ENCODE measurements at regions of chr4 and their contacts with region 1.

Region 1: GRCh38 chr4:26197018-26197779 is 123.6 kb upstream of the RBPJ start:
- DNase-seq: peak; percentile 93
- H3K4me3 Mint-ChIP-seq: peak overlapping the region; percentile 74
- H3K27ac Mint-ChIP-seq: peak overlapping the region; percentile 96
- H3K4me1 Mint-ChIP-seq: peaks cover 72% of the 10 kb centered on the region
- H3K27me3 Mint-ChIP-seq: no peaks in the 10 kb centered on the region

Region 2: DNA sequence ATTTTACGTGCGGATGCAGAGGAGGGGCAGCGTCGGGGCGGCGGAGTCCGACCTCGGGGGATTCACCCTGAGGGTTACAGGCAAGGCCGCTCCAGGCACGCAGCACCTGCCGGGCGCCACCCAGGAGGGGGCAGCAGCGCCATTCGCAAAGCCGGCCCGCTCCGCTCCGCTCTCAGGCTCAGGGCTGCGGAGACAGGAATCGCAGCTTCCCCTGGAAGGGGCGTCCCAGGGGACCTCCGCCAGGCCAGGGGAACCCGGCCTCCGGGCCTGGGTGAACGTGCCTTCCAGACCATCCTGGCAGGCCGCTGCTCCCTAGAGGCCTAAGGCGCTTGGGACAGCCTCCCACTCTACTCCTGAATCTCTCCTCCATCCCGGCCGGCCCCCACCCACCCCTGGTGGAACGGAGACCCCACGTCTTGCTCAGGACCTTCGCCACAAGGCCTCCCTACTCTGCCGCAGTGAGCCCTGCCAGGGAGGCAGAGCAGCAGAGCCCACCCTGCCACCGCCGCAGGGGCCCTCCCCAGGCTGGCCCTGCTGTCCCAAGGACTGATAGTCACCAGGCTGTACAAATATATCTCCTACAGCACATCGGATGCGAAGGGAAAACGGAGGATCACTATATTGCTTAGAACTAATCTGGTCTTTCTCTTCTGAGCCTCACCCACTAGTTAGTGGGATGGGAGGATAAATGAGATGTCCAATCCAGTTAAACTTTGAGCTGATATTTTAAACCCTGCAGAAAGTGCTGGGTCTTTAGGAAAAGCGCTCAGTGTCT is 168.2 kb before region 1 on chr4:
- intact Hi-C with region 1: loop called (anchors 5 kb)
- DNase-seq: peak; percentile 93
- H3K4me3 Mint-ChIP-seq: peak overlapping the region; percentile 22
- H3K27ac Mint-ChIP-seq: peak overlapping the region; percentile 47
- H3K4me1 Mint-ChIP-seq: peaks cover 18% of the 10 kb centered on the region
- H3K27me3 Mint-ChIP-seq: no peaks in the 10 kb centered on the region

Region 3: GRCh38 chr4:26088433-26088928 is 108.7 kb before region 1 on chr4:
- intact Hi-C with region 1: loop called (anchors 1 kb)
- DNase-seq: peak; percentile 77
- H3K4me3 Mint-ChIP-seq: peak overlapping the region; percentile 80
- H3K27ac Mint-ChIP-seq: peak overlapping the region; percentile 99
- H3K4me1 Mint-ChIP-seq: peaks cover 68% of the 10 kb centered on the region
- H3K27me3 Mint-ChIP-seq: no peaks in the 10 kb centered on the region

Region 4: GRCh38 chr4:26144526-26145155 is 52.6 kb before region 1 on chr4:
- intact Hi-C with region 1: loop called (anchors 1 kb)
- DNase-seq: no peak
- H3K4me3 Mint-ChIP-seq: peak overlapping the region; percentile 56
- H3K27ac Mint-ChIP-seq: peak overlapping the region; percentile 98
- H3K4me1 Mint-ChIP-seq: peaks cover 53% of the 10 kb centered on the region
- H3K27me3 Mint-ChIP-seq: no peaks in the 10 kb centered on the region

Region 5: DNA sequence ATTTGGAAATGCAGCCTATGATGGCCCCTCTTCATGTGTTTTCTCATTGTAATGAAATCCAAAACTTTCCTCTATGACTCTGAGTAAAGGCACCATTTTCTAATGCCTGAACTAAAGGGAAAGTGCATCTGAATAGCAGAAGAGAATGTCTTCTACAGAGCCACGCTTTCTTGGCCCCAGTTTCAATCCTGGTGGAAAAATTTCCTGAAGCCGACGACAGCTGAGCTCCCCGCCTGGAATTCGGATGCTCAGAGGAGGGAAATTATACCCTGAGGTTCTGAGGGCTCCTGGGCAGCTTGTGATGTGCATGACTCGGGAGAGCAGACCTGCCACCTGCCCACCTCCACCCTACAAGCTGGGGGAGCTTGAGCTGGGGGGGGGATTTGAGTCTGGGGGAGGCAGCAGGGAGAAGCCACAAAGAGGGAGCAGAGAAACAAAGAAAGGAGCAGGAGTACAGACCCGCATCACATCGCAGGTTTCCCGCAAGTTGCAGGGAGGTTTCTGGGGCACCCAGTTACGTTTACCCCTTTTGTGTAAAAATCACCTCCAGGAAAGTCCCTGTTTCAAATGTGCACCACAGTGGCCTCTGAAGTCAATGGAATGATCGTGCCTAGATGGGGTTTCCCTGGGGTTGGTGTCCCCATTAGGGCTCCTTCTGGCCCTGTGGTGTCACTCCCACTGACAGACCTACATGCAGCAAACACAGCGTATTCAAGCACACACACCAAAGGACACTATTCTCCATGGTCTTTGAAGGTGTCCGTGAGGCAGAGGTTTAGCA is 22.0 kb before region 1 on chr4:
- intact Hi-C with region 1: loop called (anchors 2 kb)
- DNase-seq: peak; percentile 75
- H3K4me3 Mint-ChIP-seq: peak overlapping the region; percentile 40
- H3K27ac Mint-ChIP-seq: peak overlapping the region; percentile 90
- H3K4me1 Mint-ChIP-seq: peaks cover 26% of the 10 kb centered on the region
- H3K27me3 Mint-ChIP-seq: no peaks in the 10 kb centered on the region

Region 6: GRCh38 chr4:26319467-26319948 is 122.3 kb after region 1 on chr4:
- intact Hi-C with region 1: loop called (anchors 1 kb)
- DNase-seq: peak; percentile 99
- H3K4me3 Mint-ChIP-seq: peak overlapping the region; percentile 97
- H3K27ac Mint-ChIP-seq: peak overlapping the region; percentile 99
- H3K4me1 Mint-ChIP-seq: peaks cover 41% of the 10 kb centered on the region
- H3K27me3 Mint-ChIP-seq: peaks cover 3% of the 10 kb centered on the region

Region 7: GRCh38 chr4:26632916-26633315 is 435.7 kb after region 1 on chr4:
- intact Hi-C with region 1: no loop called
- DNase-seq: no peak
- H3K4me3 Mint-ChIP-seq: no peak overlapping the region
- H3K27ac Mint-ChIP-seq: no peak overlapping the region
- H3K4me1 Mint-ChIP-seq: no peaks in the 10 kb centered on the region
- H3K27me3 Mint-ChIP-seq: no peaks in the 10 kb centered on the region